ENCODE measurements at regions of chr2 and their contacts with region 1.

Region 1: GRCh38 chr2:166127217-166128155 is at the start of gene SCN1A:
- DNase-seq: peak in 3 of 7 donors; percentile 5 to 25 (median 11)
- H3K4me3 ChIP-seq: no peak within 1 kb of the TSS
- H3K27ac ChIP-seq: no peak within 1 kb of the TSS
- H3K4me1 ChIP-seq: no peaks in the 10 kb centered on the region
- H3K27me3 ChIP-seq: no peaks in the 10 kb centered on the region
- CTCF ChIP-seq: peak; percentile 38 to 87 (median 72)
- POLR2A ChIP-seq: no peak
- total RNA-seq, gene SCN1A: 0.07 to 8.9 (median 0.41) TPM in 5 of 9 donors, not detected in the others

Region 2: GRCh38 chr2:165953655-165954606 is 173.6 kb before region 1 on chr2 and contains the start of gene TTC21B:
- intact Hi-C with region 1: loop called in 1 of 2 experiments (anchors 5 kb)
- DNase-seq: peak; percentile 95 to 97 (median 95)
- H3K4me3 ChIP-seq: peak within 1 kb of the TSS in 3 of 4 donors; percentile 40 to 72 (median 63)
- H3K27ac ChIP-seq: peak within 1 kb of the TSS in 4 of 5 donors; percentile 65 to 90 (median 85)
- H3K4me1 ChIP-seq: peaks cover 0 to 19% of the 10 kb centered on the region in 2 donors
- H3K27me3 ChIP-seq: no peaks in the 10 kb centered on the region
- CTCF ChIP-seq: peak; percentile 75 to 91 (median 84)
- POLR2A ChIP-seq: peak; percentile 58 to 83
- total RNA-seq, gene TTC21B: 4.8 to 28.5 (median 14.3) TPM

Region 3: DNA sequence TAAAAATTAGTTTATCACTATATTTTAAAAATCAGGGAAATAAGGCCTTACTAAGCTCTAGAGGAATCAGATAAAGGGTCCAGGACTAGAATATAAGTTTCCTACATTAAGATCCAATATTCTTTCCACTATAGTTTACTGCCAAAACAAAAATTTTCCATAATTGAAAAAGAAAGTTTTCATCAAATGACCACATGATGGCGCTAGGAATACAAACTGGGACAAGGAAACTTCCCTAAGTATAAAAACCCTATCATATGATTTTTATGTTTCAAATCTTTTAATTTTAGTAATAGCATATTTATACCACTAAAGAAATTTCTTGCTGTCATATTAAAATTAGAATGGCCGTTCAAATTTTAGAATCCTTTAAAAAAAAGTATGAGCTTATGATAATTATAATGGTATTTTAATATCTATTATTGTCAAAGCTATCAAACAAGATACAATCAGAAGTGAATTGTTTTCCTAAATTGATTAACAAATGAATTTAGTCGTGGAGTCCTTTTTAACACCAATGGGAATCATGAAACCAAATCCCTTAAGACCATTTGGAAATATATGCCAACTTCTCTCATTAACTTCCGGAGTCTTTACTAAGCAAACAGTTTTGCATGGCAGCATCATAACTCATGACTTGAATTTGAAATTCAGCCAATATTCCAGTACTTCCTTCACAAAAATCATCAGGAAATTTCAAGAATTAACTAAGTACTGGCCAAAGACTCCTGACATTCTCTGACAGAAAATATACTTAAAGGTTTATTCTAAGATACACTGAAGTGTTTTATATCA is 69.9 kb before region 1 on chr2:
- intact Hi-C with region 1: loop called in 1 of 2 experiments (anchors 10 kb)
- DNase-seq: no peak
- H3K4me3 ChIP-seq: no peak overlapping the region
- H3K27ac ChIP-seq: no peak overlapping the region
- H3K4me1 ChIP-seq: no peaks in the 10 kb centered on the region
- H3K27me3 ChIP-seq: no peaks in the 10 kb centered on the region
- CTCF ChIP-seq: peak in 5 of 6 experiments; percentile 28 to 68 (median 50)
- POLR2A ChIP-seq: no peak